Activated CD4-positive, alpha-beta T cell treated with anti-CD3 and anti-CD28 coated beads for 36 hours (primary cell): ENCODE measurements at regions of chrX and their contacts with region 1.

Region 1: DNA sequence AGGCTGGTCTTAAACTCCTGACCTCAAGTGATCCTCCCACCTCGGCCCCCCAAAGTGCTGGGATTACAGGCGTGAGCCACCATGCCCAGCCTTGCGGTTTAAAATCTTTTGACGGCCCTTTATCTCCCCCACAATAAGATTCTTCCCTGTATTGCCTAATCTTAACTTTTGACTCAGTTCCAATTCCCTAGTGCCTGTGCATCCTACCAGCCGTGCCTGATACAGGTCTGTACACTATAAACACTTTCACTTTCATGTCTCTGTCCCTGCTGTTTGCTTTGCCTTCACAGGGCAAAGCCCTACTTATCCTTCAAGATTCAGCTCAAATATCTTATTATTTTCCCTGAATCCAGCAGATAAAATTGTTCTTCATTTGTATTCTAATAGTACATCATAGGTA is 74.6 kb downstream of the WDR44 start:
- DNase-seq: peak; percentile 6
- ATAC-seq: peak; percentile 57
- H3K4me3 Mint-ChIP-seq: no peak overlapping the region
- H3K27ac Mint-ChIP-seq: peak overlapping the region; percentile 37
- H3K4me1 Mint-ChIP-seq: peaks cover 18% of the 10 kb centered on the region
- H3K27me3 Mint-ChIP-seq: no peaks in the 10 kb centered on the region

Region 2: DNA sequence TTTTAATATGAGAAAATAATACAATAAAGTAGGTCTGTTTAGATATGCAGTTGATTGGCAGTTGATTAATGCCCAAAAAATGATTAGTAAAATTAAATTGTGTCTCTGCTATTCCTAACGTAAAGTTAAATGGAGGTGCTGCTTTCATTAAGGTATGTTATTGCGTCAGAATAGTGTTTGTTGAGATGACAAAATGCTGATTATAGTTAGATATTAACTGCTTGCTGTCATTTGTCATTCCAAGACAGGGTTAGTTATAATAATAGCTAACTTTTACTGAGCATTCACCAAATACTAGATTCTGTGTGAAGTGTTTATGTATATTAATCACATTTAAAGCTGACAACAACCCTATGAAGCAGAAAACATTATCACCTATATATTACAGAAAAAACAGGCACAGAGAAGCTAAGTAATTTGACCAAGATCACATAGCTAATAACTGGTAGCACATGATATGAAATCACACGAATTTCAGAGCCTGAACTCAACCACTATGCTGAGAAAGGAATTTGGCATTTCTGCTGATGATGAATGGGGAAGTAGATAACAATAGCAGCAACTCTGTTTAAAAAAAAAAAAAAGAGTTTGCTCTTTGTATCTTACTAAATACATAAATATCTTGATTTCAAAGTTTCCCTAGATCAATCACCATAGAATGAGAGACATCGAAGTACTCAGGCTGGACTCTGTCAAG is 134.2 kb before region 1 on chrX:
- CTCF ChIA-PET with region 1: no interaction called
- POLR2A ChIA-PET with region 1: no interaction called
- intact Hi-C with region 1: no loop called
- DNase-seq: no peak
- ATAC-seq: no peak
- H3K4me3 Mint-ChIP-seq: no peak overlapping the region
- H3K27ac Mint-ChIP-seq: no peak overlapping the region
- H3K4me1 Mint-ChIP-seq: no peaks in the 10 kb centered on the region
- H3K27me3 Mint-ChIP-seq: no peaks in the 10 kb centered on the region

Region 3: GRCh38 chrX:118353081-118353850 is 67.2 kb before region 1 on chrX:
- CTCF ChIA-PET with region 1: no interaction called
- POLR2A ChIA-PET with region 1: no interaction called
- intact Hi-C with region 1: loop called (anchors 5 to 10 kb)
- DNase-seq: no peak
- ATAC-seq: peak; percentile 9
- H3K4me3 Mint-ChIP-seq: no peak overlapping the region
- H3K27ac Mint-ChIP-seq: no peak overlapping the region
- H3K4me1 Mint-ChIP-seq: peaks cover 56% of the 10 kb centered on the region
- H3K27me3 Mint-ChIP-seq: no peaks in the 10 kb centered on the region